ENCODE measurements at regions of chr4 and their contacts with region 1.

Region 1: GRCh38 chr4:184282251-184282713 is 64.6 kb upstream of the ENPP6 start:
- DNase-seq: peak; percentile 90
- ATAC-seq: peak; percentile 84
- H3K4me3 Mint-ChIP-seq: peak overlapping the region; percentile 52
- H3K27ac Mint-ChIP-seq: peak overlapping the region; percentile 96
- H3K4me1 Mint-ChIP-seq: peaks cover 69% of the 10 kb centered on the region
- H3K27me3 Mint-ChIP-seq: no peaks in the 10 kb centered on the region
- CTCF ChIP-seq: peak; percentile 58

Region 2: DNA sequence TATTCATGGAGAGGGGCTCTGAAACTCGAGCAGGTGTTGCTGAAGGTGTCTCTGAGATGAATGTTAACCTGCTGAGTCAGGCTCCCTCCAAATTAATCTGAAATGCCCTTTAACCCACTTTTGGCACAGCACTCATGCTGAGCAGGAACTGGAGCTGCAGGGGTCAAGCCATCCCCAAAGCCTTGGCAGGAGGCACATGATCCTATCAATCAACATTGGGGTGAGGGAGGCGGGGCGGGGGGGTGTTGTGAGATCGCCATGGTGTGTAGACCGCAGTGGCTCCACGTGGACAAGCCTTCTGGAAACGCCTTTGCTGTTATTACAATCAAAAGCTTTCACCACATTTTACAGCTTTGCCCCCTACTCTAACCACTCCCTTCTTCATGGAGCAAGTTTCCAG is 81.1 kb before region 1 on chr4:
- CTCF ChIA-PET with region 1: no interaction called
- POLR2A ChIA-PET with region 1: no interaction called
- intact Hi-C with region 1: no loop called
- DNase-seq: no peak
- ATAC-seq: no peak
- H3K4me3 Mint-ChIP-seq: no peak overlapping the region
- H3K27ac Mint-ChIP-seq: no peak overlapping the region
- H3K4me1 Mint-ChIP-seq: no peaks in the 10 kb centered on the region
- H3K27me3 Mint-ChIP-seq: peaks cover 8% of the 10 kb centered on the region
- CTCF ChIP-seq: no peak

Region 3: GRCh38 chr4:184215709-184216328 is 66.5 kb before region 1 on chr4:
- CTCF ChIA-PET with region 1: no interaction called
- POLR2A ChIA-PET with region 1: no interaction called
- intact Hi-C with region 1: no loop called
- DNase-seq: no peak
- ATAC-seq: no peak
- H3K4me3 Mint-ChIP-seq: no peak overlapping the region
- H3K27ac Mint-ChIP-seq: no peak overlapping the region
- H3K4me1 Mint-ChIP-seq: no peaks in the 10 kb centered on the region
- H3K27me3 Mint-ChIP-seq: peaks cover 24% of the 10 kb centered on the region
- CTCF ChIP-seq: no peak

Region 4: GRCh38 chr4:184310171-184310567 is 27.9 kb after region 1 on chr4:
- CTCF ChIA-PET with region 1: interaction called, 18 read pairs
- POLR2A ChIA-PET with region 1: interaction called, 15 read pairs
- intact Hi-C with region 1: loop called (anchors 5 kb)
- DNase-seq: peak; percentile 72
- ATAC-seq: peak; percentile 51
- H3K4me3 Mint-ChIP-seq: peak overlapping the region; percentile 18
- H3K27ac Mint-ChIP-seq: peak overlapping the region; percentile 88
- H3K4me1 Mint-ChIP-seq: peaks cover 68% of the 10 kb centered on the region
- H3K27me3 Mint-ChIP-seq: no peaks in the 10 kb centered on the region
- CTCF ChIP-seq: peak; percentile 60

Region 5: GRCh38 chr4:184349283-184350039 is 67.2 kb after region 1 on chr4:
- CTCF ChIA-PET with region 1: no interaction called
- POLR2A ChIA-PET with region 1: no interaction called
- intact Hi-C with region 1: no loop called
- DNase-seq: no peak
- ATAC-seq: no peak
- H3K4me3 Mint-ChIP-seq: no peak overlapping the region
- H3K27ac Mint-ChIP-seq: no peak overlapping the region
- H3K4me1 Mint-ChIP-seq: peaks cover 16% of the 10 kb centered on the region
- H3K27me3 Mint-ChIP-seq: peaks cover 2% of the 10 kb centered on the region
- CTCF ChIP-seq: no peak

Region 6: DNA sequence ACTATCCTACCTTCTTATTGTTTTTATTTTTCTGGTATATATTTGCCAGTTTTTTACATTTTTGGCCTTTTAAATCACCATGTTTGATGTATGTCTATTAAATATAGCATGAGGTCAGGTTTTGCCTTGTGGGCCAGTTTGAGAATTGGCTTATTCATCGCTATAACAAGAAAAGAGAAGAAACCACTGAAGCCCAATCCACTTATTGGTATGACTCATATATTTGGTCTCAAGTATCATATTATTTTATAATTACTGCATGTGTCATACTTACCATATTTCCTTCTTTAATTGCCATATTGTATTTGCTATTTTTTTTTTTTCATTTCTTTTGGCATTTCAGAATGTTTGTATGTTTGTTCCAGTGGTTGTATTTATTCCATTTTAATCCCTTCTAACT is 92.7 kb after region 1 on chr4:
- CTCF ChIA-PET with region 1: no interaction called
- POLR2A ChIA-PET with region 1: no interaction called
- intact Hi-C with region 1: no loop called
- DNase-seq: no peak
- ATAC-seq: no peak
- H3K4me3 Mint-ChIP-seq: no peak overlapping the region
- H3K27ac Mint-ChIP-seq: no peak overlapping the region
- H3K4me1 Mint-ChIP-seq: peaks cover 27% of the 10 kb centered on the region
- H3K27me3 Mint-ChIP-seq: no peaks in the 10 kb centered on the region
- CTCF ChIP-seq: no peak

Region 7: GRCh38 chr4:184417802-184418511 is 135.7 kb after region 1 on chr4:
- CTCF ChIA-PET with region 1: interaction called, 7 read pairs
- POLR2A ChIA-PET with region 1: interaction called, 5 read pairs
- intact Hi-C with region 1: loop called (anchors 5 kb)
- DNase-seq: peak; percentile 22
- ATAC-seq: peak; percentile 76
- H3K4me3 Mint-ChIP-seq: peak overlapping the region; percentile 70
- H3K27ac Mint-ChIP-seq: peak overlapping the region; percentile 93
- H3K4me1 Mint-ChIP-seq: peaks cover 81% of the 10 kb centered on the region
- H3K27me3 Mint-ChIP-seq: no peaks in the 10 kb centered on the region
- CTCF ChIP-seq: no peak

Region 8: GRCh38 chr4:184649026-184649970 is 367.0 kb after region 1 on chr4 and contains the starts of genes CASP3 and PRIMPOL:
- CTCF ChIA-PET with region 1: no interaction called
- POLR2A ChIA-PET with region 1: interaction called, 10 read pairs
- intact Hi-C with region 1: no loop called
- DNase-seq: peak; percentile 95
- ATAC-seq: peak; percentile 83
- H3K4me3 Mint-ChIP-seq: peak within 1 kb of the TSS; percentile 94
- H3K27ac Mint-ChIP-seq: peak within 1 kb of the TSS; percentile 92
- H3K4me1 Mint-ChIP-seq: peaks cover 46% of the 10 kb centered on the region
- H3K27me3 Mint-ChIP-seq: no peaks in the 10 kb centered on the region
- CTCF ChIP-seq: no peak
- total RNA-seq, gene CASP3: 96.9 to 100 TPM
- total RNA-seq, gene PRIMPOL: 16.9 to 17.3 TPM

Measured in activated CD8-positive, alpha-beta T cell treated with anti-CD3 and anti-CD28 coated beads for 36 hours (primary cell).